Heart right ventricle (tissue), 16 donors: ENCODE measurements at regions of chr5 and their contacts with region 1.

Region 1: GRCh38 chr5:142364251-142365145 is 39.7 kb upstream of the SPRY4 start:
- DNase-seq: peak; percentile 64 to 75
- ATAC-seq: peak; percentile 15 to 66 (median 45)
- H3K4me3 ChIP-seq: peak overlapping the region in 5 of 10 donors; percentile 13 to 34 (median 29)
- H3K27ac ChIP-seq: peak overlapping the region in 9 of 10 donors; percentile 71 to 96 (median 88)
- H3K4me1 ChIP-seq: peaks cover 3 to 36% (median 23%) of the 10 kb centered on the region in 9 donors
- H3K27me3 ChIP-seq: peaks cover 0 to 29% (median 0%) of the 10 kb centered on the region in 7 donors
- CTCF ChIP-seq: no peak

Region 2: DNA sequence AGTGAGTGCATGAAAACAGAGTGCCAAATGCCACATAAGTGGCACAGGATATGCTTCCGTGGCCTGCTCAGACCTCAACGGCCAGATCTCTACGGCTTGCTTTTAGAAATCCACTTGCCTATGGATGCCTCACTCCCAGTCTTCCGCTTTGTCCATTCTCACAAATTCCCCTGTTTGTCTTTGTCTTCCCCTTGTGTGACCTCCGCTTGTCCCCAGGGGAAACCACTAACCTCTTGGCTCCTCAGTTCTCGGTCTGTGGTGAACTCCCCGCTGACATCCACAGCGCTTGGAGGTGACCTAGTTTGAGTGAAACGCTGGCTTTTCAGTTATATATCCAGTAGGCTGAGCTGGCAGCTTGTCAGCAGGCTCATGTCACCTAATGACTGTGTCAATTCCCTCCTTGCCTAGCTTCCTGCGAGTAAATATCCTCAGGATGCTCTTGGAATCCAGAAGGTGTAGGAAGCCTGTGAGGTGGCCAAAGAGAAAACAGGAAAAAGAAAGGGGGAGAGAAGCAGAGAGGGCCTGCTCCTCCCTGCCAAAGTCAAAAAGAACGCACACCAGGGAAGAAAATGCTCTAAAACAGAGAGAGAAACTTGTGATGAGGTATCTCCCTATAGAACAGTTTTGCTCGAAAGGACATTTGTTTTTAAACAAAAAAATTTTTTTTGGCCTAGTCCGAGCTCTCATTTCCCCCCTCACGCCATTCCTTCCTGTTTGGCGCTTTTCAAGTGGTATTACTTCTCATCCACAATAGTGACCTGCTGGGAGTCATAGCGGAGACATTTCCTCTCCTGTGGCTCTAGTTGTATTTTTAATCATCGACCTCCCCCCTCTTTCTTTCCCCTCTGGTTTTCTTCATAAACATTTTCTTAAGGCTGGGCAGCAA is 61.9 kb after region 1 on chr5:
- intact Hi-C with region 1: loop called in 4 of 10 experiments (anchors 5 kb)
- DNase-seq: peak; percentile 60 to 85
- ATAC-seq: peak; percentile 67 to 84 (median 78)
- H3K4me3 ChIP-seq: peak overlapping the region in 1 of 10 donors; percentile 18
- H3K27ac ChIP-seq: peak overlapping the region in 9 of 10 donors; percentile 35 to 76 (median 64)
- H3K4me1 ChIP-seq: peaks cover 5 to 55% (median 33%) of the 10 kb centered on the region in 9 donors
- H3K27me3 ChIP-seq: no peaks in the 10 kb centered on the region
- CTCF ChIP-seq: no peak